Heart right ventricle (tissue), 16 donors: ENCODE measurements at regions of chr1 and their contacts with region 1.

Region 1: DNA sequence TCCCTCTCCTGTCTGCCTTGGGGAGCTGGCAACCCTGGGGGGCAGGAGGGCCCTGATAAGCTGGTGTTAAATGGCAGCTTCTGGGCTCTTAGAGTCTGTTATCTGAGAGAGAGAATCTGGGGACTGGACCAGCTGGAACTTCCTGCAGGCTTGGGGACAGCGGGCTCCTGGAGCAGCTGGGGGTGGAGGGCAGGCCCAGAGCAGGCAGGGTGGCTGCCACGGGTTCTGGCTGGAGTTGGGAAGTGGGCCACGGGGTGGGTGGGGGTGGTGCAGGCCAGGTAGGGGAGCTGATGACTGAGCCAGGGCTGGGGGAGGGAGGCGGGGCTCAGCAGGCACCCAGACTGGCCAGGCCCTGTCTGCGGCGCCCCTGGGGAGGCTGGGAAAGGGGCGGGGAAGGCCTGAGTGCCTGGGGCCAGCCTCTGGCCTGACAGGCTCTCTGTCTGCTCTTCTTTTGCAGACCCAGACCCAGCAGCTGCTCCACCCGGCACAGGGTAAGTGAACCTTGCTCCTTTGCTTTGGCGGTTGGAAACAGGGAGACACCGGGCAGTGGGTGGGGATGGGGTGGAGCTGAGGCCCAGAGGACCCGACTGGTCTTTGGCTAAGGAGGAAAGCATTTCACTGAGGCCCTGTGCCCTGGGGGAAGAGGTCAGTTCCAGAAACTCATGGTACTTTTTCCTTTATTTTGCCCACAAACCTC is 48.6 kb downstream of the ARHGEF10L start:
- DNase-seq: peak; percentile 70 to 76
- ATAC-seq: peak; percentile 80 to 94 (median 90)
- H3K4me3 ChIP-seq: peak overlapping the region in 9 of 10 donors; percentile 8 to 46 (median 35)
- H3K27ac ChIP-seq: peak overlapping the region; percentile 58 to 94 (median 84)
- H3K4me1 ChIP-seq: peaks cover 22 to 71% (median 46%) of the 10 kb centered on the region in 9 donors
- H3K27me3 ChIP-seq: no peaks in the 10 kb centered on the region
- CTCF ChIP-seq: no peak

Region 2: DNA sequence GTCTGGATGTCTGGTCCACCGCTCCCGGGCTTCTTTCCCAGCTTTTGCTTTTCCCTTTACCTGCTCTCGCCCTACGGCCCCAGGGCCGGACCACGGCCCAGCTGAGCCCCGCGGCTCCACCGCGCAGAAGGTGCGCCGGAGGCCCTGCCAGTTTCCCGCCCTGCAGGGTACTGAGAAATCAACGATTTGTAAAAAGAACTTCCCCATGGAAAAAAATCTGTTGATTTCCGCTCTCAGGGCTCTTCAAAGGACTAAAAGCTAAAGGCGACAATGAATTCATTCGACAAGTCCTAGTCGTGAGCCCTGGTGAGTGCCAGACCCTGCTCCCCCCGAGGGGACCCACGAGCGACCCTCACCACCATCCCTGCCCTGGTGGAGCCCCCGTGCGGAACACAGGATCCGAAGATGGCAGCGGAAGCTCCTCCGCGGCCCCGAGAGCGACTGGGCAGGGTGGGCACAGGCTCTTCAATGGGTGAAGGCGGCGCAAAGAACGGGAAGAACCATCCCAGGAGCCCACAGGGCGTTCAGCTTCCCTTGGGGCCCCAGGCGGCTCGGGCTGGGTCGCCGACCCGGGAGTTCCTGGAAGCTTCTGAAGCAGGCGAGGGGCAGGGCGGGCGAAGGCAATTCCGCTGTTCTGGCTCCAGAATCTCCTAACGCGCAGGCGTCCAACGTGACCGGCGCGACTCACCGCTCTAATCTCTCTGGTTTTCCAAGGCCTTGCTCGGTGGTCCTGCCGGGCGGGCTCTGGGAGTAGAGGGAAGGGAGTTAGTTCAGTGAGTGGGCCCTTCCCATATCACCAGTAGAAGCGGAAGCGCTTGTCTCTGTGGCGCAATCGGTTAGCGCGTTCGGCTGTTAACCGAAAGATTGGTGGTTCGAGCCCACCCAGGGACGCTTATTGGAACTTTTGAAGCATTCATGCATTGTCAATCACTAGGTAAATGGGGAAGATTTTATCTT is 699.0 kb before region 1 on chr1:
- intact Hi-C with region 1: no loop called
- DNase-seq: peak; percentile 70 to 86
- ATAC-seq: peak; percentile 91 to 99 (median 93)
- H3K4me3 ChIP-seq: peak overlapping the region; percentile 53 to 76 (median 66)
- H3K27ac ChIP-seq: peak overlapping the region; percentile 78 to 97 (median 92)
- H3K4me1 ChIP-seq: peaks cover 3 to 17% (median 6%) of the 10 kb centered on the region in 9 donors
- H3K27me3 ChIP-seq: no peaks in the 10 kb centered on the region
- CTCF ChIP-seq: peak in 7 of 9 donors; percentile 4 to 54 (median 34)

Region 3: GRCh38 chr1:17531682-17532487 is 56.3 kb before region 1 on chr1:
- intact Hi-C with region 1: loop called in 2 of 10 experiments (anchors 5 kb)
- DNase-seq: peak; percentile 68 to 79
- ATAC-seq: peak; percentile 82 to 98 (median 91)
- H3K4me3 ChIP-seq: no peak overlapping the region
- H3K27ac ChIP-seq: peak overlapping the region; percentile 70 to 89 (median 80)
- H3K4me1 ChIP-seq: peaks cover 3 to 37% (median 15%) of the 10 kb centered on the region in 9 donors
- H3K27me3 ChIP-seq: no peaks in the 10 kb centered on the region
- CTCF ChIP-seq: no peak

Region 4: DNA sequence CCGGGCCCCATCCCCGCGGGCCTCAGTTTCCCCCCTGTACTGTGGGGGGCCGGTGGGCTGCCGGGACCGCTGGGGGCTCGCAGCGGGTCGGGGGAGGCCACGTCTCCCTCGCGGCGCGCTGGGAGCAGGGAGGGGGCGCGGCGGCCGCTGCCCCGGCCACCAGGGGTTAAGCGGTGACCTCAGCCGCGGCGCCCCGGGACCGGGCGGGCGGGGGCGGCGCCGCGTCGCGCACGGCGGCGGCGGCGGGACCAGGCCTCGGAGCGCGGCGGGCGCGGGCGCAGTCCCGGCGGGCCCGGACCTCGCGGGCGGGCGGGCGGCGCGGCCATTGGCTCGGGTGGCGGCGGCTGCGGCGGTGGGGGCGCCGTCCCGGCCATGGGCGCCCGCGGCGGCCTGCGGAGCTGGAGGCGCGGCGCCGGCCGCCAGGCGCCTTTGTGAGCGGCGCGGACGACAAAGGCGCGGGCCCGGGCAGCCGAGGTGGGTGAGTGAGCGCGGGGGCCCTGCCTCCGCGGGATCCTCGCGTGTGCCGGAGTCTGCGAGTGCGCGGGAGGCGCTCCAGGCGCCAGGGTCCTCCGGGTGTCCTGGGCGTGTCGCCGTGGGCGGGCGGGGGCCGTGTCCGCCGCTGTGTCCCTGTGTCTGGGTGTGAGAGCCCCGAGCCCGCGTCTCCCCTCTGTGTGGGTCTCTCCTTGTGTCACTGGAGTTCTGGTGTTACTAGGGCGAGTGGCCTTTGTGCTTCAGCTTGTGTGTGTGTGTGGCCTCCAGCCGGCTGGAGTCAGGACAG is 48.5 kb before region 1 on chr1 and contains the start of gene ARHGEF10L:
- intact Hi-C with region 1: loop called in 2 of 10 experiments (anchors 5 kb)
- DNase-seq: peak; percentile 22 to 38
- ATAC-seq: peak; percentile 25 to 60 (median 40)
- H3K4me3 ChIP-seq: peak within 1 kb of the TSS; percentile 61 to 83 (median 77)
- H3K27ac ChIP-seq: peak within 1 kb of the TSS; percentile 83 to 96 (median 90)
- H3K4me1 ChIP-seq: peaks cover 3 to 29% (median 16%) of the 10 kb centered on the region in 9 donors
- H3K27me3 ChIP-seq: peaks cover 0 to 35% (median 0%) of the 10 kb centered on the region in 7 donors
- CTCF ChIP-seq: no peak
- total RNA-seq, gene ARHGEF10L: 45.4 to 65.0 (median 49.4) TPM